ENCODE measurements at regions of chr11 and their contacts with region 1.

Region 1: GRCh38 chr11:134523201-134523600 is 111.2 kb upstream of the B3GAT1 start:
- DNase-seq: no peak
- H3K4me3 ChIP-seq: no peak overlapping the region
- H3K4me3 Mint-ChIP-seq: no peak overlapping the region
- H3K27ac Mint-ChIP-seq: no peak overlapping the region
- H3K4me1 ChIP-seq: peaks cover 7% of the 10 kb centered on the region; the same call in 1 of the 2 replicates
- H3K4me1 Mint-ChIP-seq: peaks cover 14% of the 10 kb centered on the region
- H3K27me3 ChIP-seq: no peaks in the 10 kb centered on the region
- H3K27me3 Mint-ChIP-seq: peaks cover 3% of the 10 kb centered on the region
- CTCF ChIP-seq: no peak

Region 2: GRCh38 chr11:134542408-134542807 is 19.2 kb after region 1 on chr11:
- CTCF ChIA-PET with region 1: no interaction called
- POLR2A ChIA-PET with region 1: no interaction called
- intact Hi-C with region 1: loop called (anchors 1 kb)
- DNase-seq: peak; percentile 91 to 95
- H3K4me3 ChIP-seq: no peak overlapping the region
- H3K4me3 Mint-ChIP-seq: peak overlapping the region; percentile 7
- H3K27ac Mint-ChIP-seq: peak overlapping the region; percentile 32
- H3K4me1 ChIP-seq: peaks cover 21% of the 10 kb centered on the region
- H3K4me1 Mint-ChIP-seq: peaks cover 18% of the 10 kb centered on the region
- H3K27me3 ChIP-seq: no peaks in the 10 kb centered on the region
- H3K27me3 Mint-ChIP-seq: peaks cover 5% of the 10 kb centered on the region
- CTCF ChIP-seq: no peak